ENCODE measurements at regions of chr1 and their contacts with region 1.

Region 1: GRCh38 chr1:209565759-209566678 is 17.5 kb upstream of the CAMK1G start:
- DNase-seq: peak; percentile 66 to 96 (median 83)

Region 2: GRCh38 chr1:208652296-208653160 is 913.5 kb before region 1 on chr1:
- intact Hi-C with region 1: loop called (anchors 5 kb)
- DNase-seq: peak; percentile 34 to 90 (median 50)

Region 3: DNA sequence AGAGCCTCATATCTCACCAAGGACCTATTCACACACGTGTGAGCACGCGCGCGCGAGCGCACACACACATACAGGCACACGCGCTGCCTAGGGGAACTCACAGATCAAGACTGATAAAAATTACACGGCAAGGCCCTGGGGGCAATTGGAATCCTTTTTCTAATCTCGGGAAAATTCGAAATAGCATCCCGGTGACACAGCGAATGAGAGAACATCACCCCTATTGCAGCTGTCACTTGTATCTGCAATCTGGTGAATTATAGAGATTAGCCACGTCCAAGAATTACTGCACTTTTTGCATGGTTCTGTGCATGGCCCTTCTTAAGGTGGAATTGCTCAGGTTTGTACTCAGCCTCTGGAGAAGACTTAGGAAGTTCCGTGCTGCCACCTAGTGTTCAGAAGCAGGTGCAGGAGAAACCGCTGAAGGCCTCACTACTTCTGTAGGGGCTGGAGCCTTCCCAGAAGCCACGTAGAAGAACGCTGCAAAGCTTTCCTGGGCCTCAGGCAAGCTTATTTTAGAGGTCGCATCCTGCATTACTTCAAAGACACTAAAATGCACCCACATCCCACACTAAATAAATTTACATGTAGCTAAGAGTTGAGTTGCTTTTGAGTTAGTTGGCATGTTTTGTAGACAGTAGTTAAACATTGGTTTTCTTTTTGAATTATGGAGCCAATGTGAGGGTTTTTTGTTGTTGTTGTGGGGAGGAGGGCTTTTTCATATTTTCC is 211.7 kb before region 1 on chr1:
- intact Hi-C with region 1: loop called (anchors 10 kb)
- DNase-seq: peak; percentile 56 to 96 (median 79)